Left cardiac atrium (tissue), 4 donors: ENCODE measurements at regions of chr3 and their contacts with region 1.

Region 1: GRCh38 chr3:40452876-40453730 is 4.0 kb upstream of the RPL14 start:
- DNase-seq: peak; percentile 99
- ATAC-seq: peak; percentile 96 to 97

Region 2: GRCh38 chr3:40191850-40192448 is 261.2 kb before region 1 on chr3:
- intact Hi-C with region 1: loop called in 1 of 2 experiments (anchors 10 kb)
- DNase-seq: peak; percentile 51
- ATAC-seq: peak; percentile 64

Region 3: GRCh38 chr3:40336101-40336500 is 117.0 kb before region 1 on chr3:
- intact Hi-C with region 1: no loop called
- DNase-seq: no peak
- ATAC-seq: no peak

Region 4: GRCh38 chr3:40524568-40525285 is 71.6 kb after region 1 on chr3 and contains the start of gene ZNF621:
- intact Hi-C with region 1: loop called in 1 of 2 experiments (anchors 5 kb)
- DNase-seq: peak; percentile 93
- ATAC-seq: peak; percentile 100
- total RNA-seq, gene ZNF621: 10.7 to 12.4 TPM